ENCODE measurements at regions of chr1 and their contacts with region 1.

Region 1: DNA sequence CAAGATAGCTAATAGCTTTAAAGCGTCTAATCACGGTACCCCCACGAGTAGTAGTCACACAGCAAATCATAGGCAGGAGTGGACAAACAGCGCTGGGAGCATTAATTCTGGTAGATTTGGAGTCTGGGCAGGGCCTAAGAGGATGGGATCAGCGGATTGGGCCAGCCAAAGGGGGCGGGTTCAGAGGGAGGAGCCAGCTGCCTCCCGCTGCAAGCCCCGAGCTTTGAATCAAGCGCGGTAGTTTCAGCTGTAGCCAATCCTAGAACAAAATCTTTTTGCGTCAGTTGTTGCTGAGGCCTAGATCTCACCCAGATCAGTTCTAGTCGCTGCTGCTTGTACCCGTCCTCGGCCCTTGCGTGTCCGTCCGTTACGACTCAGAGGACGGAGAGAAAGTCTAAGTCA is 576 bp upstream of the NASP start:
- DNase-seq: peak; percentile 93 to 94
- H3K4me3 ChIP-seq: peak overlapping the region; percentile 86
- H3K4me3 Mint-ChIP-seq: peak overlapping the region; percentile 97
- H3K27ac Mint-ChIP-seq: peak overlapping the region; percentile 97
- H3K4me1 ChIP-seq: 0 out of 2 replicates have a peak, but pooled peaks cover 4% of the 10 kb centered on the region
- H3K4me1 Mint-ChIP-seq: no peaks in the 10 kb centered on the region
- H3K27me3 ChIP-seq: no peaks in the 10 kb centered on the region
- H3K27me3 Mint-ChIP-seq: no peaks in the 10 kb centered on the region
- CTCF ChIP-seq: no peak

Region 2: DNA sequence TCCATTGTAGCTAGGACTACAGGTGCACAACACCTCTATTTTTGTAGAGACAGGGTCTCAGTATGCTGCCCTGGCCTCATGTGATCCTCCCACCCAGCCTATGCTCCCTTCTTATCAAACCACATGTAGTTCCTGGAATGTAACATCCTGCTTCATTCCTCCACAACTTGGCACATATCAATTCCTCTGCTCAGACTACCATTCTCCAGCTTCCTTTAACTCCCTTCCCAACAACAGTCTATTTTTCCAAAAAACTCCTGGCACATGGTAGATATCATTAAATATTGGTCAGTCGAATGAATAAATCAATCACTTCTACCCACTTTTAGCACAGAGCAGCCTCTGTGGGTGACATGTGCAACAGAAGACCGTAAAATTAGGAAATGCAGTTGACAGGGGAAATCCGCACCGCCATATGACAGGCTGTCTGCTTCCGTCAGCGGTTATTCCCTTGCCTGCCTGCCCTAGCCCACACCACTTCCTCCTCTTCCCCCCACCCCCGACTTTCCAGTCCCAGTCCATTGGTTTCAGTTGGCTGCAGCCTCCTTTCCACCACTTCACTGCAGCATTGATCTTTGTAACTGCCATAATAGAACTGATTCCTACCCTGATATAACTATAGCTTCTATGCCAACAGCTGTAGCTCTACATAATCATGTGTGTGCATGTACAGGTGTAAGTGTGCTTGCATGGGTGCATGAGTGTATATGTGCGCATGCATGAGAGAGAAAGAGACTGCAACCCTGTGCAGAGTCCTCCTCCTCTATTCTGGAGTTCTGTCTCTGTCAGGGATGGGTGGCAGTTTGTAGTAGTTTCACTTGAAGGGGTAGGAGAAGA is 39.5 kb before region 1 on chr1:
- CTCF ChIA-PET with region 1: no interaction called
- POLR2A ChIA-PET with region 1: no interaction called
- intact Hi-C with region 1: no loop called
- DNase-seq: no peak
- H3K4me3 ChIP-seq: no peak overlapping the region
- H3K4me3 Mint-ChIP-seq: no peak overlapping the region
- H3K27ac Mint-ChIP-seq: no peak overlapping the region
- H3K4me1 ChIP-seq: peaks cover 10% of the 10 kb centered on the region; the same call in 1 of the 2 replicates
- H3K4me1 Mint-ChIP-seq: peaks cover 14% of the 10 kb centered on the region
- H3K27me3 ChIP-seq: no peaks in the 10 kb centered on the region
- H3K27me3 Mint-ChIP-seq: no peaks in the 10 kb centered on the region
- CTCF ChIP-seq: no peak

Region 3: GRCh38 chr1:45608175-45609156 is 25.2 kb after region 1 on chr1:
- CTCF ChIA-PET with region 1: no interaction called
- POLR2A ChIA-PET with region 1: no interaction called
- intact Hi-C with region 1: loop called (anchors 1 kb)
- DNase-seq: no peak
- H3K4me3 ChIP-seq: no peak overlapping the region
- H3K4me3 Mint-ChIP-seq: no peak overlapping the region
- H3K27ac Mint-ChIP-seq: no peak overlapping the region
- H3K4me1 ChIP-seq: no peaks in the 10 kb centered on the region
- H3K4me1 Mint-ChIP-seq: no peaks in the 10 kb centered on the region
- H3K27me3 ChIP-seq: no peaks in the 10 kb centered on the region
- H3K27me3 Mint-ChIP-seq: no peaks in the 10 kb centered on the region
- CTCF ChIP-seq: no peak

Region 4: GRCh38 chr1:45686317-45687013 is 103.2 kb after region 1 on chr1 and contains the start of gene GPBP1L1:
- CTCF ChIA-PET with region 1: no interaction called
- POLR2A ChIA-PET with region 1: interaction called, 4 read pairs
- intact Hi-C with region 1: loop called (anchors 5 kb)
- DNase-seq: peak; percentile 95 to 97
- H3K4me3 ChIP-seq: peak within 1 kb of the TSS; percentile 77
- H3K4me3 Mint-ChIP-seq: peak within 1 kb of the TSS; percentile 84
- H3K27ac Mint-ChIP-seq: peak within 1 kb of the TSS; percentile 86
- H3K4me1 ChIP-seq: no peaks in the 10 kb centered on the region; the same call in 1 of the 2 replicates
- H3K4me1 Mint-ChIP-seq: no peaks in the 10 kb centered on the region
- H3K27me3 ChIP-seq: no peaks in the 10 kb centered on the region
- H3K27me3 Mint-ChIP-seq: no peaks in the 10 kb centered on the region
- CTCF ChIP-seq: no peak
- total RNA-seq, gene GPBP1L1: 57.3 and 61.8 TPM in 2 replicates

Measured in Caco-2 (cell line).